CD4-positive, alpha-beta memory T cell (primary cell): ENCODE measurements at regions of chr6 and their contacts with region 1.

Region 1: GRCh38 chr6:134097114-134097707 is 44.8 kb upstream of the SLC2A12 start:
- DNase-seq: peak; percentile 56 to 60 (median 57)
- H3K4me3 ChIP-seq: no peak overlapping the region
- H3K4me3 Mint-ChIP-seq: no peak overlapping the region
- H3K27ac ChIP-seq: no peak overlapping the region
- H3K27ac Mint-ChIP-seq: no peak overlapping the region
- H3K4me1 ChIP-seq: no peaks in the 10 kb centered on the region
- H3K4me1 Mint-ChIP-seq: no peaks in the 10 kb centered on the region
- H3K27me3 ChIP-seq: no peaks in the 10 kb centered on the region
- H3K27me3 Mint-ChIP-seq: peaks cover 17 to 18% of the 10 kb centered on the region in 2 donors

Region 2: GRCh38 chr6:132830334-132830751 is 1266.9 kb before region 1 on chr6:
- CTCF ChIA-PET with region 1: no interaction called
- POLR2A ChIA-PET with region 1: no interaction called
- intact Hi-C with region 1: loop called (anchors 10 kb)
- DNase-seq: no peak
- H3K4me3 ChIP-seq: no peak overlapping the region
- H3K4me3 Mint-ChIP-seq: no peak overlapping the region
- H3K27ac ChIP-seq: no peak overlapping the region
- H3K27ac Mint-ChIP-seq: peak overlapping the region in 1 of 7 donors; percentile 17
- H3K4me1 ChIP-seq: no peaks in the 10 kb centered on the region
- H3K4me1 Mint-ChIP-seq: no peaks in the 10 kb centered on the region
- H3K27me3 ChIP-seq: no peaks in the 10 kb centered on the region
- H3K27me3 Mint-ChIP-seq: no peaks in the 10 kb centered on the region

Region 3: GRCh38 chr6:133837801-133838349 is 259.3 kb before region 1 on chr6:
- CTCF ChIA-PET with region 1: interaction called, 18 read pairs
- POLR2A ChIA-PET with region 1: no interaction called
- intact Hi-C with region 1: loop called (anchors 2 kb)
- DNase-seq: peak in 4 of 5 donors; percentile 45 to 55 (median 50)
- H3K4me3 ChIP-seq: peak overlapping the region in 1 of 2 donors; percentile 39
- H3K4me3 Mint-ChIP-seq: peak overlapping the region; percentile 23 to 86 (median 68)
- H3K27ac ChIP-seq: no peak overlapping the region
- H3K27ac Mint-ChIP-seq: no peak overlapping the region
- H3K4me1 ChIP-seq: no peaks in the 10 kb centered on the region
- H3K4me1 Mint-ChIP-seq: peaks cover 0 to 8% (median 5%) of the 10 kb centered on the region in 4 donors
- H3K27me3 ChIP-seq: no peaks in the 10 kb centered on the region
- H3K27me3 Mint-ChIP-seq: peaks cover 11 to 20% of the 10 kb centered on the region in 2 donors

Region 4: GRCh38 chr6:133973109-133973971 is 123.9 kb before region 1 on chr6:
- CTCF ChIA-PET with region 1: interaction called, 28 read pairs
- POLR2A ChIA-PET with region 1: no interaction called
- intact Hi-C with region 1: loop called (anchors 1 kb)
- DNase-seq: peak in 4 of 5 donors; percentile 38 to 46 (median 42)
- H3K4me3 ChIP-seq: no peak overlapping the region
- H3K4me3 Mint-ChIP-seq: no peak overlapping the region
- H3K27ac ChIP-seq: no peak overlapping the region
- H3K27ac Mint-ChIP-seq: peak overlapping the region in 4 of 7 donors; percentile 11 to 66 (median 18)
- H3K4me1 ChIP-seq: peaks cover 37% of the 10 kb centered on the region
- H3K4me1 Mint-ChIP-seq: peaks cover 31 to 45% (median 38%) of the 10 kb centered on the region in 4 donors
- H3K27me3 ChIP-seq: no peaks in the 10 kb centered on the region
- H3K27me3 Mint-ChIP-seq: no peaks in the 10 kb centered on the region

Region 5: GRCh38 chr6:134111062-134111677 is 14.0 kb after region 1 on chr6:
- CTCF ChIA-PET with region 1: interaction called, 23 read pairs
- POLR2A ChIA-PET with region 1: interaction called, 4 read pairs
- intact Hi-C with region 1: no loop called
- DNase-seq: peak; percentile 43 to 67 (median 57)
- H3K4me3 ChIP-seq: no peak overlapping the region
- H3K4me3 Mint-ChIP-seq: no peak overlapping the region
- H3K27ac ChIP-seq: no peak overlapping the region
- H3K27ac Mint-ChIP-seq: no peak overlapping the region
- H3K4me1 ChIP-seq: no peaks in the 10 kb centered on the region
- H3K4me1 Mint-ChIP-seq: peaks cover 0 to 5% (median 0%) of the 10 kb centered on the region in 4 donors
- H3K27me3 ChIP-seq: no peaks in the 10 kb centered on the region
- H3K27me3 Mint-ChIP-seq: peaks cover 4 to 20% of the 10 kb centered on the region in 2 donors